CD8-positive, alpha-beta memory T cell (primary cell): ENCODE measurements at regions of chr2 and their contacts with region 1.

Region 1: DNA sequence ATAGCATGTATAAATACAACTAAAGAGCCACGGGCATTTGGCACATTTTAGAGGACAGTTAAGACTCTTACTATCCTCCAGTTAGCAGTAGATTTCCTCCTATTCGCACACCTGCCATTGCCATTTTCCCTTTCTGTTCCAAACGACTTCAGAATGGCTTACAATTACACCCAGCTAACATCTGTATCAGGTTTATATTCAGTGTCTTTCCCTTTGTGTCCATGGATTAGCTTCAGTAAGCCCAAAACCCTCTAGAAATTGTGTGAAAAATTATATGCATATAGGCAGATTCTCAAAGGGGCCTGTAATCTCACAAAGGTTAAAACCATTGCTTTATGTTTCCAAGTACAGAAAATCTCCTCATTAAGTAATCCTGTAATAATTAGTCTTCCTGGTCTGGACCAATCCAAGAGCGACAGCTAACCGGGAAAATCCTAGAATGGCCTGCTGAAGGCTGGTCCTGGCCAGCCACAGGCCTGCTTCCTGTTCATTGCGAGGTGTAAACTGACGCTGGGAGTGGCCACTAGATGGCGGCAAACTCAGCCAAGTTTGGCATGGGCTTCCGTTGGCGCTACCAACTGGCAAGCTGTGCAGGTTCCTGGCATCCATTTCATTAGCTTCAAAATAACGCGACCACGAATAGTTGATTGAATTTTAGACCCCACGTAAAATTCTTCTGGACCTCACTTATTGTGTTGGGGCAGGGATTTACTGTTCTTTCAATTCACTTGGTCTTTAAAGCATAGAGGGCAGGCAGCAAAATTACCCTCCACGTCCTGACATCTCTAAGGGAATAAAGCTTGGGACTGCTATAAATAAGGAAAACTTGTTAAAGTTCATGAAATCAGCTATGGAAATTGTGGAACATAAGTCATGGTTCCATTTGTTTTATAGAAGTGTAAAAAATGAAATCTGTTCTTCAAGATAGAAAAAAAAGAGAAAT is 17.1 kb downstream of the ARHGAP25 start:
- DNase-seq: peak; percentile 82 to 93 (median 89)
- H3K4me3 ChIP-seq: peak overlapping the region; percentile 11
- H3K4me3 Mint-ChIP-seq: peak overlapping the region; percentile 5 to 67 (median 50)
- H3K27ac ChIP-seq: no peak overlapping the region
- H3K27ac Mint-ChIP-seq: peak overlapping the region; percentile 66 to 97 (median 92)
- H3K4me1 ChIP-seq: peaks cover 91% of the 10 kb centered on the region
- H3K4me1 Mint-ChIP-seq: peaks cover 85 to 95% (median 94%) of the 10 kb centered on the region in 3 donors
- H3K27me3 ChIP-seq: no peaks in the 10 kb centered on the region
- H3K27me3 Mint-ChIP-seq: no peaks in the 10 kb centered on the region

Region 2: DNA sequence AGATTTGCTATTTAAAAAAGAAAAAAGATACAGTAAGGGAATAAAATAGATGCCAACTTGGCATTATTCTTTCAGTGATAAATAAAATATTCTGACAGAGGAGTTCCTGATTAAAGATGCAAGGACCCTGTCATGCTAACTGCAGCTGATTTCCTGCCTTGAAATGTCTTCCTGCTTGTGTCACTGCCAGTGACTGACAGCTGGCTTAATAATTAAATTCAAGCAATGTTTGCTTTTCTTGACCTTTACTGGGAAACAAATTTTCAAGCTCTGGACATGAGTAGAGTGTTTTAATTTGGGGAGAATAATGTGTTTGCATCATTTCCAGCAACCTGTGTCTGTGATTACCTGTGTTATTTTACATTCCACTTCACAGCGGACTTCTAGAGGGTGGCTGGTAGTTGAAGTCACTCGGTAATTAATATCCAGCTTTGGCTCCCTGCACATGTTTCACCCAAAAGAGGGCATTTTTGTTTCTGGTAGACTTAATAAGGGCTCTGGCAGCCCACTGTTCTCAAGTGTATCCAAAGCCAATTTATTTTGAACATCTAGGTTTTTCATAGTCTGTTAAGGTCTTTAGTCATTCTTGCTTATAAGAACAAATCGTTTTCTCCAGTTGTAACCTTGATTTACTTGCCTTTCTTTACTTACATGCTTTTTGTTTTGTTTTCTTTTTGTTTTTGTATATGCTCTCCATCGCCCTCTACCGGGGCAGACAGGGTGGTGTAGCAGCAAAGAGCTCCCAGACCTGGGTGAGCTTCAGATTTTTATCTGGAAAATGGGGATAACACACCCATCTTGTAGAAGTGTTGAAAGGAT is 156.8 kb before region 1 on chr2:
- CTCF ChIA-PET with region 1: no interaction called
- POLR2A ChIA-PET with region 1: no interaction called
- DNase-seq: peak; percentile 33 to 67 (median 40)
- H3K4me3 ChIP-seq: no peak overlapping the region
- H3K4me3 Mint-ChIP-seq: peak overlapping the region in 5 of 7 donors; percentile 3 to 57 (median 23)
- H3K27ac ChIP-seq: no peak overlapping the region
- H3K27ac Mint-ChIP-seq: peak overlapping the region in 4 of 8 donors; percentile 1 to 22 (median 6)
- H3K4me1 ChIP-seq: peaks cover 5% of the 10 kb centered on the region
- H3K4me1 Mint-ChIP-seq: peaks cover 3 to 13% (median 12%) of the 10 kb centered on the region in 3 donors
- H3K27me3 ChIP-seq: no peaks in the 10 kb centered on the region
- H3K27me3 Mint-ChIP-seq: peaks cover 1 to 15% of the 10 kb centered on the region in 2 donors

Region 3: DNA sequence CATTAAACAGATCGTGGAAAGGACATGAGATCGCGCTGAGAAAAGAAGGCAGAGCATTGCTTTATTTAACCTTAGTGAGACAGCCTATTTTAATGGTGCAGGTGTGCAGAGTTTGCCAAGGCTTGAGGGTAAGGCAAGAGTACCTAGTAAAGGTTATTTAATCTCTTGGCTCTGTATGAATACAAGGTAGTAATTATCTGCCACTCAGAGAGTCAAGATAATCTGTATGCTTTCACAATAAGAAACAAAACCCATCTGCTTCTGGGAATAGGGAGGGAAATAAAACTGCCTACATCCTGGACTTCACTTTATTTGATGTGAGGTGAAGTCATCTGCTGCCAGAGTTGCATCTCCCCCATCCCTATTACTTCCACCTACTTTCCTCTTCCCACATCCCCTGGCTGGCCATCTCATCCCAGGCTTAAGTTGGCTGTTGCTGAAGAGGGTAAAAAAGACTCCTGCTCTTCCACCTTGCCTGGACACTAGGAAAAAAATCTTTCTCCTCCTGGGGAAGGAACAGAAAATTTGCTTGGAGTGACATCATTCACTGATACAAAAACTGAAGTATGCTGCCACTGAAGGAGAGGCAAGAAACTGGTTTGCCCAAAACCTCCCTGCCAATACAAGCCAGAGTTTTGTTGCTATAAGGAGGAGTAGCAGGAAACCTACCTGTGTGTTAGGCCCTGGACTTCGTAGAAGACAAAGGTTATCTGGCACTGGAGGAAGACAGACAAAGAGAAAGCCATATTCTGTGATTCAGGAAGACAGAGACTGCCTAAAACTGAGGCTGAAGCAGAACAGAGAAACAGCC is 52.9 kb before region 1 on chr2:
- CTCF ChIA-PET with region 1: no interaction called
- POLR2A ChIA-PET with region 1: no interaction called
- DNase-seq: no peak
- H3K4me3 ChIP-seq: no peak overlapping the region
- H3K4me3 Mint-ChIP-seq: no peak overlapping the region
- H3K27ac ChIP-seq: no peak overlapping the region
- H3K27ac Mint-ChIP-seq: no peak overlapping the region
- H3K4me1 ChIP-seq: no peaks in the 10 kb centered on the region
- H3K4me1 Mint-ChIP-seq: peaks cover 7 to 10% (median 10%) of the 10 kb centered on the region in 3 donors
- H3K27me3 ChIP-seq: no peaks in the 10 kb centered on the region
- H3K27me3 Mint-ChIP-seq: peaks cover 7 to 11% of the 10 kb centered on the region in 2 donors

Region 4: GRCh38 chr2:68721482-68722101 is 30.1 kb before region 1 on chr2:
- CTCF ChIA-PET with region 1: interaction called, 26 read pairs
- POLR2A ChIA-PET with region 1: interaction called, 4 read pairs
- DNase-seq: peak in 4 of 5 donors; percentile 20 to 69 (median 48)
- H3K4me3 ChIP-seq: peak overlapping the region; percentile 38
- H3K4me3 Mint-ChIP-seq: peak overlapping the region; percentile 42 to 86 (median 79)
- H3K27ac ChIP-seq: peak overlapping the region; percentile 43
- H3K27ac Mint-ChIP-seq: peak overlapping the region; percentile 83 to 99 (median 92)
- H3K4me1 ChIP-seq: peaks cover 82% of the 10 kb centered on the region
- H3K4me1 Mint-ChIP-seq: peaks cover 85 to 98% (median 96%) of the 10 kb centered on the region in 3 donors
- H3K27me3 ChIP-seq: no peaks in the 10 kb centered on the region
- H3K27me3 Mint-ChIP-seq: no peaks in the 10 kb centered on the region

Region 5: GRCh38 chr2:68766376-68766845 is 14.7 kb after region 1 on chr2:
- CTCF ChIA-PET with region 1: interaction called, 110 read pairs
- POLR2A ChIA-PET with region 1: interaction called, 18 read pairs
- DNase-seq: peak; percentile 58 to 84 (median 82)
- H3K4me3 ChIP-seq: peak overlapping the region; percentile 42
- H3K4me3 Mint-ChIP-seq: peak overlapping the region; percentile 85 to 97 (median 94)
- H3K27ac ChIP-seq: peak overlapping the region; percentile 49
- H3K27ac Mint-ChIP-seq: peak overlapping the region; percentile 91 to 100 (median 98)
- H3K4me1 ChIP-seq: peaks cover 100% of the 10 kb centered on the region
- H3K4me1 Mint-ChIP-seq: peaks cover 96 to 100% (median 100%) of the 10 kb centered on the region in 3 donors
- H3K27me3 ChIP-seq: no peaks in the 10 kb centered on the region
- H3K27me3 Mint-ChIP-seq: peaks cover 0 to 4% of the 10 kb centered on the region in 2 donors

Region 6: GRCh38 chr2:68799140-68800026 is 47.7 kb after region 1 on chr2:
- CTCF ChIA-PET with region 1: interaction called, 15 read pairs
- POLR2A ChIA-PET with region 1: interaction called, 6 read pairs
- DNase-seq: no peak
- H3K4me3 ChIP-seq: no peak overlapping the region
- H3K4me3 Mint-ChIP-seq: no peak overlapping the region
- H3K27ac ChIP-seq: no peak overlapping the region
- H3K27ac Mint-ChIP-seq: peak overlapping the region; percentile 80 to 97 (median 84)
- H3K4me1 ChIP-seq: peaks cover 53% of the 10 kb centered on the region
- H3K4me1 Mint-ChIP-seq: peaks cover 59 to 72% (median 61%) of the 10 kb centered on the region in 3 donors
- H3K27me3 ChIP-seq: no peaks in the 10 kb centered on the region
- H3K27me3 Mint-ChIP-seq: no peaks in the 10 kb centered on the region

Region 7: DNA sequence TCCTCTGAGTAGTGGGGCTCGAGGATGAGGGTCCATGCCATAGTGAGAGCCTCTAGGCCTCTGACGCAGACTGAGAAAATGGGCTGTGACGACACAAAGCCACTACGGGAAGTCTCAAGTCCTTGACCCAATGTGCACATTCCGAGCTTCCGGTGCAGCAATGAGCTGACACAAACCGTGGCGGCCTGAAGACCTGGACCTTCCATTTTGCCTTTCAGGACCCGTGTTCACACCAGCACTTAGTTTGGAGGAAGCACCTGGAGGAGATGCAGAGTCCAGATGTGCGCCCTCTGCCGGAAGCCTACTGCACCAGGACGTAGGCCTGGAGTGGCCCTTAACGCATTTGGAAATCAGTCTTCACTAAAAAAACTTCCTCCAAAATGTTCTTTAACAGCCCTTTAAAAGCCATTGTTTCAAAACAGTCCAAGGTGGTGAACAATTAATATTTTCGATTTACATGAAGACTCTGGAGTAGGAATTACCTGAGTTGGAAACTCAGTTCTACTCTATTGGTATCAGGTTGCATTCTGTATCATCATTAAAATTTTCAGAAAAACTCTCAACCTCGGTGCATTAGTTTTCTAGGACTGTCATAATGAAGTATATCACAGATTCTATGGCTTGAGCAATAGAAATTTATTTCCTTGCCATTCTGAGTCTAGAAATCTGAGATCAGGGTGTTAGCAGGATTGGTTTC is 85.6 kb after region 1 on chr2:
- CTCF ChIA-PET with region 1: interaction called, 46 read pairs
- POLR2A ChIA-PET with region 1: interaction called, 3 read pairs
- DNase-seq: peak; percentile 36 to 73 (median 48)
- H3K4me3 ChIP-seq: no peak overlapping the region
- H3K4me3 Mint-ChIP-seq: no peak overlapping the region
- H3K27ac ChIP-seq: no peak overlapping the region
- H3K27ac Mint-ChIP-seq: peak overlapping the region in 2 of 8 donors; percentile 51 to 61
- H3K4me1 ChIP-seq: peaks cover 14% of the 10 kb centered on the region
- H3K4me1 Mint-ChIP-seq: peaks cover 14 to 37% (median 16%) of the 10 kb centered on the region in 3 donors
- H3K27me3 ChIP-seq: no peaks in the 10 kb centered on the region
- H3K27me3 Mint-ChIP-seq: no peaks in the 10 kb centered on the region

Region 8: DNA sequence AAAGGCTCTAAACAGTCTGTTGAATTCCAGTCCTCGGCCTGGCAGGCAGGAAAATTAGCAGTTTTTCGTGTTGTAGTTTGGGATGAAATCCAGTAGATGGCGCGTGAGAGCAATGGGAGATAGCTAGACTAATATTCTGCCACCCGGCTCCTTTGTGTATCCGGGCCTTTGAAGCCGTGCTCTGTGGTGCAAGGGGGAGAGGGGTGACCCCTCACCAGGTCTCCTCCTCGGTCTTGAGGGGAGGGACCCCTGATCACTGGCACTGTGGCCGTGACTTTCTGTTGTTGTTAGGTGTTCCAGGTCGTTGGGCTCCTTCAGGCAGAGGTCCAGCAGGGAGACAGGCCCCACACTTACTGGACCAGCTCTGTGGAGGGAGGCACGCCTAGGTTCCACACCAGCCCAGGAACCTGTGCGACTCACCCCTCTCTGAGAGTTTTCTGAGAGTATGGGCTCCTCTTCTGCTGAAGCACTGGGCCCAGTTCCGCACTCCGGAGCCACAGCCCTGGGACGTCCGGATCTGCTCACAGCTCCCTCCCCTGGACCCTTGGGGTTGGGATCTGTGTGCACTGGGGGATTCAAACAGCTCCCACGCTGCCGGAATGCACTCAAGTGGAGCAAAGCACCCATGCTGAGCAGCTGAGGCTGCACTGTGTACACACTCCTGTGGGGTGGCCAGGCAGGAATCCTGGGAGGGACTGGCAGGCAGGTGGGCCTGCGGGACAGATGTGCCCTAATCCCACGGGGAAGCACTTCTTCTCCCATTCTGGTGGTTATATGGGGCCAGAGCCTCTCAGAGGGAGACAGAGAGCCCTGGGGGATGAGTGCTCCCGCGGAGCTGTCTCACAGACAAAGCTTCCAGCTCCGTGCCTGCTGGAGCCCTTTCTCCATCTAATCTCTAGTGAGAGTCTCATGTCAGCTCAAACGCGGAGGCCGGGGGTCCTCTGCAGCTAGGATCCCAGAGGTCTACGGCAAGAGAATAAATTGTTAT is 192.2 kb after region 1 on chr2:
- CTCF ChIA-PET with region 1: no interaction called
- POLR2A ChIA-PET with region 1: no interaction called
- DNase-seq: peak; percentile 24 to 59 (median 37)
- H3K4me3 ChIP-seq: no peak overlapping the region
- H3K4me3 Mint-ChIP-seq: no peak overlapping the region
- H3K27ac ChIP-seq: no peak overlapping the region
- H3K27ac Mint-ChIP-seq: peak overlapping the region in 1 of 8 donors; percentile 33
- H3K4me1 ChIP-seq: no peaks in the 10 kb centered on the region
- H3K4me1 Mint-ChIP-seq: peaks cover 0 to 4% (median 4%) of the 10 kb centered on the region in 3 donors
- H3K27me3 ChIP-seq: peaks cover 12% of the 10 kb centered on the region
- H3K27me3 Mint-ChIP-seq: peaks cover 33 to 61% of the 10 kb centered on the region in 2 donors